Head of caudate nucleus (tissue), 42 donors: ENCODE measurements at regions of chr12 and their contacts with region 1.

Region 1: GRCh38 chr12:125528281-125528680 is 463.0 kb downstream of the AACS start:
- DNase-seq: peak; percentile 5 to 88 (median 70)

Region 2: DNA sequence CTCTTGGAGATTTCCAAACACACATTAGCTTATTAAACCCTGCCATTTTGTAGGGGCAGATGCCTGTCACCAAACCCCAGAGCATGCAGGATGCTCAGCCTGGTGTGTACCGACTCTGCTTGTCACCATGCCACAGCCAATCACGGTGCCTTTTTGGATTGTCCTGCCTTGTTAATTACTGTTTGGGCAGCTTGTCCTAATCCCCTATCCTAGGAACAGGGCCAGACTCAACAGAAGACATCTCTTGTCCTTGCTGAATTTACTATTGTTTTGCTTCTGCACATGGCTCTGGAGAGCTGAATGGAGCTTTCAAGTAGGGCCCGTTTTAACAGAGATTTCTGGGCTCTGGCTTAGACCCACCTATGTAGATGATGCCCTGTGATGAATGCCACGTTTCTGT is 74.5 kb before region 1 on chr12:
- intact Hi-C with region 1: loop called (anchors 5 kb)
- DNase-seq: peak; percentile 54 to 96 (median 88)

Region 3: DNA sequence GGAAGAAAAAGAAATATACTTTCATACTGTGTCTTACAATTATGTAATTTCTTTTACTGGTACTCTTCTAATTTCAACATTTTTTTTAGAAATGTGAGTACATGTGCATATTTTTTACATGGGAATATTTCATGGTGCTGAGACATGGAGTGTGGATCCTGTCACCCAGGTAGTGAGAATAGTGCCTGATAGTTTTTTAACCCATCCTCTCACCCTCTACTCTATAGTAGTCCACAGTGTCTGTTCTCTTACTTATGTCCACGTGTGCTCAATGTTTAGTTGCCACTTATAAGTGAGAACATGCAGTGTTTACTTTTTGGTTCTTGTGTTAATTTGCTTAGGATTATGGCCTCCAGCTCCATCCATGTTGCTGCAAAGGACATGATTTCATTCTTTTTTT is 85.8 kb after region 1 on chr12:
- intact Hi-C with region 1: no loop called
- DNase-seq: no peak